Panc1 (cell line): ENCODE measurements at regions of chr3 and their contacts with region 1.

Region 1: GRCh38 chr3:130276203-130276803 is 69.2 kb upstream of the COL6A5 start:
- DNase-seq: peak; percentile 41
- ATAC-seq: peak; percentile 83
- H3K4me3 ChIP-seq: no peak overlapping the region
- H3K27ac ChIP-seq: no peak overlapping the region
- H3K4me1 ChIP-seq: no peaks in the 10 kb centered on the region
- H3K27me3 ChIP-seq: peaks cover 25% of the 10 kb centered on the region; the same call in 1 of the 2 replicates
- CTCF ChIP-seq: peak; percentile 91

Region 2: GRCh38 chr3:130117933-130118332 is 158.4 kb before region 1 on chr3:
- CTCF ChIA-PET with region 1: no interaction called
- POLR2A ChIA-PET with region 1: no interaction called
- in situ Hi-C with region 1: no loop called
- intact Hi-C with region 1: no loop called
- DNase-seq: no peak
- ATAC-seq: no peak
- H3K4me3 ChIP-seq: no peak overlapping the region
- H3K27ac ChIP-seq: no peak overlapping the region
- H3K4me1 ChIP-seq: no peaks in the 10 kb centered on the region
- H3K27me3 ChIP-seq: peaks cover 2% of the 10 kb centered on the region; the same call in 1 of the 2 replicates
- CTCF ChIP-seq: no peak

Region 3: GRCh38 chr3:130539005-130539404 is 262.7 kb after region 1 on chr3:
- CTCF ChIA-PET with region 1: interaction called, 3 read pairs
- POLR2A ChIA-PET with region 1: no interaction called
- in situ Hi-C with region 1: no loop called
- intact Hi-C with region 1: loop called (anchors 1 kb)
- DNase-seq: peak; percentile 20
- ATAC-seq: peak; percentile 84
- H3K4me3 ChIP-seq: no peak overlapping the region
- H3K27ac ChIP-seq: no peak overlapping the region
- H3K4me1 ChIP-seq: no peaks in the 10 kb centered on the region
- H3K27me3 ChIP-seq: peaks cover 2% of the 10 kb centered on the region; the same call in 1 of the 2 replicates
- CTCF ChIP-seq: peak; percentile 87